Sigmoid colon (tissue), 7 donors: ENCODE measurements at regions of chr7 and their contacts with region 1.

Region 1: GRCh38 chr7:64794171-64794844 is at the start of gene ZNF138:
- DNase-seq: peak; percentile 98
- H3K4me3 ChIP-seq: peak within 1 kb of the TSS; percentile 62 to 88 (median 72)
- H3K27ac ChIP-seq: peak within 1 kb of the TSS; percentile 78 to 87 (median 83)
- H3K4me1 ChIP-seq: peaks cover 0 to 19% (median 8%) of the 10 kb centered on the region in 4 donors
- H3K27me3 ChIP-seq: no peaks in the 10 kb centered on the region
- CTCF ChIP-seq: peak in 1 of 4 experiments; percentile 28
- EP300 ChIP-seq: peak in 1 of 4 donors; percentile 29
- POLR2A ChIP-seq: peak; percentile 54 to 61
- total RNA-seq, gene ZNF138: 8.4 to 26.0 (median 11.2) TPM

Region 2: GRCh38 chr7:64562626-64563275 is 231.6 kb before region 1 on chr7 and contains the start of gene ZNF680:
- intact Hi-C with region 1: loop called (anchors 10 kb)
- DNase-seq: peak; percentile 98
- H3K4me3 ChIP-seq: peak within 1 kb of the TSS; percentile 71 to 76 (median 72)
- H3K27ac ChIP-seq: peak within 1 kb of the TSS; percentile 74 to 92 (median 86)
- H3K4me1 ChIP-seq: peaks cover 0 to 36% (median 29%) of the 10 kb centered on the region in 4 donors
- H3K27me3 ChIP-seq: no peaks in the 10 kb centered on the region
- CTCF ChIP-seq: no peak
- EP300 ChIP-seq: peak in 1 of 4 donors; percentile 24
- POLR2A ChIP-seq: peak; percentile 41 to 59
- total RNA-seq, gene ZNF680: 9.8 to 28.0 (median 16.7) TPM

Region 3: GRCh38 chr7:64665980-64666662 is 128.2 kb before region 1 on chr7 and contains the start of gene ZNF107:
- intact Hi-C with region 1: loop called (anchors 5 kb)
- DNase-seq: peak; percentile 98
- H3K4me3 ChIP-seq: peak within 1 kb of the TSS; percentile 57 to 79 (median 76)
- H3K27ac ChIP-seq: peak within 1 kb of the TSS; percentile 67 to 81 (median 72)
- H3K4me1 ChIP-seq: peaks cover 0 to 12% (median 6%) of the 10 kb centered on the region in 4 donors
- H3K27me3 ChIP-seq: no peaks in the 10 kb centered on the region
- CTCF ChIP-seq: no peak
- EP300 ChIP-seq: no peak
- POLR2A ChIP-seq: no peak
- total RNA-seq, gene ZNF107: 3.0 to 8.3 (median 4.5) TPM

Region 4: DNA sequence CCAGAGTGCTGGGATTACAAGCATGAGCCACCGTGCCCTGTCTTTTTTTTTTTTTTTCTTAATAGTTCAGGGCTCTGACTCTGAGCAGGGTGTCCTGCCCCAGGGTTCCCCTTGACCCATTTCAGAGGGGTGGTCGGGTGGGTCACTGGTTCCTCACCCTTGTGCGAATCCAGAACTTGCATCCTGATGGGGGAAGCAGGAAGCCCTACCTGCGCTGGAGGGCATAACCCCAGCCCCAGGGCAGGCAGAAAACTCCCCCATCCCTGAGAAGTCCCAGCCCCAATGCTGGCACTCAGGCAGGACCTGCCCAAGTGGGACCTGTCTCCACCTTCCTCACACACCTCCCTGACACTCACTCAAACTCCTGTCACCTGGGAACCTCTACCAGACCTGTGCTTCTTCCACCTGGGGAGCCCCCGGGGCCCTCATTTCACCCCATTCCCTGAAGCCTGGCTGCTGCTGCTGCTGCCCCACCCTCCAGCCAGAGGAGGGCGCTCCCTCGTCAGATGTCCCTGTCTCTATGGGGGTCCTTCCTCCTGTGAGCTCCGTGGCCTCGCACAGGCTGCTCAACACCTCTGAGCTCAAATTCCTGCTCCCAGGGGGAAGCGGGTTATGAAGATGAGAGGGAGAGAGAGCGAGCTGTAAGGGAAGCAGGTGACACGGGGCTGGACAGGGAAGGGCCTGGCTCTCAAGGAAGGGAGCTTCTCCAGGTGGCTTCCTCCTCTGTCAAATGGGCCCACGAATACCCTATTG is 93.6 kb after region 1 on chr7:
- intact Hi-C with region 1: loop called (anchors 5 kb)
- DNase-seq: peak; percentile 63
- H3K4me3 ChIP-seq: peak overlapping the region in 3 of 4 donors; percentile 47 to 53 (median 51)
- H3K27ac ChIP-seq: no peak overlapping the region
- H3K4me1 ChIP-seq: peaks cover 0 to 57% (median 42%) of the 10 kb centered on the region in 4 donors
- H3K27me3 ChIP-seq: no peaks in the 10 kb centered on the region
- CTCF ChIP-seq: peak in 2 of 4 experiments; percentile 13 to 28
- EP300 ChIP-seq: no peak
- POLR2A ChIP-seq: no peak